A673 (cell line): ENCODE measurements at regions of chr9 and their contacts with region 1.

Region 1: GRCh38 chr9:116504081-116504480 is 183.0 kb upstream of the TRIM32 start:
- DNase-seq: no peak
- H3K4me3 ChIP-seq: no peak overlapping the region
- H3K27ac ChIP-seq: no peak overlapping the region
- H3K4me1 ChIP-seq: no peaks in the 10 kb centered on the region
- H3K27me3 ChIP-seq: no peaks in the 10 kb centered on the region
- CTCF ChIP-seq: no peak

Region 2: DNA sequence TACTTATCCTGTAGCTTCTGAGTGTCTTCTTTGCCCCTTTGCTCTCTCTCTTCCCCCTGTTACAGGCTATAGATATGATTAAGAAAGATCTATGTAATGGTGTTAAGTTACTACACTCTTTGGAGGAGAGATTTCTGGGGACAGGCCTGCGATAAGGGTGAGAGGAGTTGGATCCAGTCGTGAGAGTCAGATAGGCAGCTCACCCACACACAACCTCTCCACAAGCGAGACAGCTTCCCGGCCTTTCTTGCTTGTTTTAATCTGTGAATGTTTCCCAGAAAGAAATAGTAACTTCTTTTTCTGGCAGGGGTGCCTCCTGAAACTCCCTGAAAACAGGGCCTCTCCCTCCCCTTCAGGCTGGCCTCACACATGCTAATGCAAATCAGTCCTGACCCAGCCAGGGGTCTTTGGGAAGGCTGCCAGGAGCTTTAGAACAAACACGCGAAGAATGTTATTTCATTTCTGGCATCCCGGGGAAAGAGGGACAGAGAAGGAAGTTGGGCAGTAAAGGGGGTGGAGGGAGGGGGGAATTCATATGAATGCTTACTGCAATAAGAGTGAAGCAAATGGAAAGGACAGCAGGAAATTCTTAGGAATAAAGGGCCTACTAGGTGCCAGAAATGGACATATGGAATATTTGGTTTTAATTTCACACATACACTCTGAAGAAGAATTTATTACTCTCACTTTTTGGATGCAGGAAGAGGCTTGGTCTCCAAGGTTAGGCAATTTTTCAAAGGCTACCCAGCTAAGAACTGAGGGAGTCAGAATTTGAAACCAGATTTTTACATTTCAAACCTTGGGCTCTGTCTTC is 32.8 kb before region 1 on chr9:
- CTCF ChIA-PET with region 1: no interaction called
- POLR2A ChIA-PET with region 1: interaction called, 11 read pairs
- intact Hi-C with region 1: no loop called
- DNase-seq: peak; percentile 91
- H3K4me3 ChIP-seq: no peak overlapping the region
- H3K27ac ChIP-seq: peak overlapping the region; percentile 61
- H3K4me1 ChIP-seq: peaks cover 36% of the 10 kb centered on the region
- H3K27me3 ChIP-seq: no peaks in the 10 kb centered on the region
- CTCF ChIP-seq: no peak